Spleen (tissue), 13 donors: ENCODE measurements at regions of chr7 and their contacts with region 1.

Region 1: GRCh38 chr7:131654668-131655326 is 98.4 kb upstream of the PODXL start:
- DNase-seq: peak; percentile 95
- H3K4me3 ChIP-seq: no peak overlapping the region
- H3K27ac ChIP-seq: no peak overlapping the region
- H3K4me1 ChIP-seq: peaks cover 0 to 12% (median 2%) of the 10 kb centered on the region in 6 donors
- H3K27me3 ChIP-seq: no peaks in the 10 kb centered on the region
- CTCF ChIP-seq: peak; percentile 84 to 96 (median 90)
- POLR2A ChIP-seq: no peak

Region 2: GRCh38 chr7:131507592-131508331 is 147.0 kb before region 1 on chr7:
- intact Hi-C with region 1: loop called (anchors 2 kb)
- DNase-seq: peak; percentile 95
- H3K4me3 ChIP-seq: no peak overlapping the region
- H3K27ac ChIP-seq: no peak overlapping the region
- H3K4me1 ChIP-seq: peaks cover 0 to 40% (median 17%) of the 10 kb centered on the region in 6 donors
- H3K27me3 ChIP-seq: no peaks in the 10 kb centered on the region
- CTCF ChIP-seq: peak; percentile 47 to 90 (median 80)
- POLR2A ChIP-seq: no peak